T-cell (primary cell): ENCODE measurements at regions of chr2 and their contacts with region 1.

Region 1: DNA sequence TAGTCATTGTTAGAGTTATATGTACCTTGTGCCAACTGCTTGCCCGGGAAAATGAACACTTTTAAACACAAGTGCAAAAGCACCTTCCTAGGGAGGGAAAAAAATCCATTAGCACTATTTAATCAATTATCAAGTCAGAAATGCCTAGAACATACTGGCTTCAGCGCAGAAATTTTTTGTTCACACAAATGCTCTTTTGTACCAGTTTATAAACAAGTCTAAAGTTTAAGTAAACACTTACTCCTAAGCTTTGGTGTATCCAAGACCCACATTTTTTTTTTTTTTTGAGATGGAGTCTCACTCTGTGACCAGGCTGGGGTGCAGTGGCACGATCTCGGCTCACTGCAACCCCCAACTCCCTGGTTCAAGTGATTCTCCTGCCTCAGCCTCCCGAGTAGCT is 30.6 kb downstream of the GFPT1 start:
- DNase-seq: no peak
- ATAC-seq: no peak
- H3K4me3 ChIP-seq: no peak overlapping the region
- H3K4me3 Mint-ChIP-seq: no peak overlapping the region
- H3K27ac ChIP-seq: no peak overlapping the region
- H3K27ac Mint-ChIP-seq: no peak overlapping the region
- H3K4me1 ChIP-seq: no peaks in the 10 kb centered on the region
- H3K4me1 Mint-ChIP-seq: no peaks in the 10 kb centered on the region
- H3K27me3 ChIP-seq: no peaks in the 10 kb centered on the region
- H3K27me3 Mint-ChIP-seq: no peaks in the 10 kb centered on the region

Region 2: GRCh38 chr2:69306822-69307578 is 49.5 kb before region 1 on chr2:
- CTCF ChIA-PET with region 1: no interaction called
- POLR2A ChIA-PET with region 1: no interaction called
- DNase-seq: peak; percentile 28 to 73 (median 51)
- ATAC-seq: peak; percentile 82 to 88 (median 88)
- H3K4me3 ChIP-seq: peak overlapping the region; percentile 56 to 81
- H3K4me3 Mint-ChIP-seq: peak overlapping the region; percentile 71 to 76 (median 74)
- H3K27ac ChIP-seq: no peak overlapping the region
- H3K27ac Mint-ChIP-seq: no peak overlapping the region
- H3K4me1 ChIP-seq: peaks cover 4 to 27% of the 10 kb centered on the region in 2 experiments
- H3K4me1 Mint-ChIP-seq: peaks cover 17 to 35% (median 31%) of the 10 kb centered on the region in 3 donors
- H3K27me3 ChIP-seq: peaks cover 7 to 45% of the 10 kb centered on the region in 2 experiments
- H3K27me3 Mint-ChIP-seq: peaks cover 27 to 28% of the 10 kb centered on the region in 2 donors

Region 3: GRCh38 chr2:69345434-69345833 is 11.0 kb before region 1 on chr2:
- CTCF ChIA-PET with region 1: no interaction called
- POLR2A ChIA-PET with region 1: interaction called in 1 of 2 experiments, 15 read pairs
- DNase-seq: no peak
- ATAC-seq: no peak
- H3K4me3 ChIP-seq: no peak overlapping the region
- H3K4me3 Mint-ChIP-seq: no peak overlapping the region
- H3K27ac ChIP-seq: no peak overlapping the region
- H3K27ac Mint-ChIP-seq: no peak overlapping the region
- H3K4me1 ChIP-seq: no peaks in the 10 kb centered on the region
- H3K4me1 Mint-ChIP-seq: no peaks in the 10 kb centered on the region
- H3K27me3 ChIP-seq: no peaks in the 10 kb centered on the region
- H3K27me3 Mint-ChIP-seq: no peaks in the 10 kb centered on the region